Endothelial cell of umbilical vein (primary cell): ENCODE measurements at regions of chr2 and their contacts with region 1.

Region 1: DNA sequence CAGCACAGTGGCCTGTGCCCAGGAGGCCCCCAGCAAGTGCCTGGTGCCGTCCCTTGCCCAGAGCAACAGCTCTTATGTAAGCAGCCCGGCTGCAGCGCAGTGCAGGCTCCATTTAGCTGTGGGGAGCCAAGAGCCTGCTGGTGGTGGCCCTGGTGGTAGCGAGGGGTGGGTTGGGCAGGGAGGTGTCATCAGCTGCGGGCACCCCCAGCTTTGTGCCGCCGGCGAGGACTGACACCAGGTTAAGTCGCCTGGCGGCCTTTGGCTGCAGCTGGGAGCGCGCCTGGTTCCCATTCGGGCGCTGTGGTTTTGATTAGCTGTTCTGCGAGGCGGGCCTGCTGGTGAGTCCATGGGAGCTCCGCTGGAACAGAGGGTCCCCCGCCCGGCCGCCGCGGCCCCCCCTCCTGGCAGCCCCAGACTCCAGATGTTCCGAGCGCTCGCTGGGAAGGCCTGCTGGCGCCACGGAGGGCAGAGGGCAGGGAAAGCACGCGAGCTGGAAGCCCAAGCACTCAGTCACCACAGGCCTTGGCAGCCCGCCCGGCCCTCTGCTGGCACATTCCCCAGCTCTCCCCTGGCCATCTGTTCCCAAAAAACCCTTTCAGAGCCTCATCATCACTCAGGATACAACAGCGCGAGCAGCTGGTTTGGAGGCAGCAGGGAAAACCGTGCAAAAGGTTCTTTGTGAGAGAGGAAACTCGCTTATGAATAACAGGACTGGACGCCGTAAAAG is 18.4 kb downstream of the ATOH8 start:
- DNase-seq: peak; percentile 100
- H3K4me3 ChIP-seq: no peak overlapping the region
- H3K27ac ChIP-seq: peak overlapping the region; percentile 100
- H3K4me1 ChIP-seq: peaks cover 38% of the 10 kb centered on the region
- H3K27me3 ChIP-seq: no peaks in the 10 kb centered on the region
- CTCF ChIP-seq: peak; percentile 32 to 42
- POLR2A ChIP-seq: peak; percentile 55

Region 2: GRCh38 chr2:85741833-85742455 is 30.2 kb before region 1 on chr2:
- CTCF ChIA-PET with region 1: interaction called, 21 read pairs
- POLR2A ChIA-PET with region 1: interaction called, 14 read pairs
- dilution Hi-C with region 1: no loop called
- intact Hi-C with region 1: loop called (anchors 1 kb)
- DNase-seq: peak; percentile 87
- H3K4me3 ChIP-seq: peak overlapping the region in 1 of 3 experiments; percentile 3
- H3K27ac ChIP-seq: peak overlapping the region; percentile 97
- H3K4me1 ChIP-seq: peaks cover 30% of the 10 kb centered on the region
- H3K27me3 ChIP-seq: no peaks in the 10 kb centered on the region
- CTCF ChIP-seq: no peak
- POLR2A ChIP-seq: no peak

Region 3: DNA sequence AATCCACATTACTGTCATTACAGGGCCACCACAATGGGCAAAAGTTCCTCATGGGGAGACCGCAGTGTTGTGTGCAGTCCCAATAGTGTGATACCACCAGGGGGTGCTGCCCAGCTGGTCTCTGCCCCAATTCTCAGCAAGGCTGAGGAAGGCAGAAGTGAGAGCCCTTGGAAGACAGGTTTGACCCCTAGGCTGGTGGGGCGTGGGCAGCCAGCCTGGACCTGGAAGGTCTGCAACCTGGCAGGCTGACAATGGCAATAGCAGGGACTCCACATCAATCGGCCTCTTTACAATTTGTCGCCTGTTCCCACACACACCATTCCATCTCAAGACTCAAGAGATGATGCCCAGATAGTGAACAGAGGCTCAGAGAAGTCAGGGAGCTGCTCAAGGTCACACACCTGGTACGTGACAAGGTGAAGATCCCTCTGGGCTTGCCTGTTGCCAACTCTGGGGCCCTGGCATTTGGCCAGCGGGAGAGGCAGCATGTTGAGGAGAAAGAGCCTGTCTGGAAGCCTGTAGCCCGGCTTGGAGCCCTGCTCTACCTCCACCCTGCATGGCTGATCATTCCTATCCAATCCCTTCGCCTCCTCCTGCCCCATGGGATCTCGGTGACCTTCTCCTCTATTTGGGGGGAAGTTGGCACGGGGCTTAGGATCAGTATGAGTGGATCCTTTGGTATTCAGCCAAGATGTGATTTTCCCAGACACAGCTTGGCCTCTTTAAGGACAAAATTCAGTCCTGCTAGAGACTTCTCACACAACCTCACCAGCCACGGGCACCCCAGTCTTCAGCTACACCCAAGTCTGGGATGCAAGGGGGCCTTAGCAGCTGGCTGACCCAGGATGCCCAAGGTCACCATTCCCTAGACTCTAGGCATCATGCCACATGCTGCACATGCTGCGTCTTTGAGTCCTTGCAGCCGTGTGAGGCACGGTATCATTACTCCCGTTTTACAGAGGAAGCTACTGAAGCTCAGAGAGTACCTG is 21.3 kb before region 1 on chr2:
- CTCF ChIA-PET with region 1: interaction called, 106 read pairs
- POLR2A ChIA-PET with region 1: interaction called, 3 read pairs
- dilution Hi-C with region 1: no loop called
- intact Hi-C with region 1: loop called (anchors 1 kb)
- DNase-seq: peak; percentile 72
- H3K4me3 ChIP-seq: no peak overlapping the region
- H3K27ac ChIP-seq: no peak overlapping the region
- H3K4me1 ChIP-seq: peaks cover 6% of the 10 kb centered on the region
- H3K27me3 ChIP-seq: no peaks in the 10 kb centered on the region
- CTCF ChIP-seq: peak; percentile 83 to 85
- POLR2A ChIP-seq: no peak

Region 4: DNA sequence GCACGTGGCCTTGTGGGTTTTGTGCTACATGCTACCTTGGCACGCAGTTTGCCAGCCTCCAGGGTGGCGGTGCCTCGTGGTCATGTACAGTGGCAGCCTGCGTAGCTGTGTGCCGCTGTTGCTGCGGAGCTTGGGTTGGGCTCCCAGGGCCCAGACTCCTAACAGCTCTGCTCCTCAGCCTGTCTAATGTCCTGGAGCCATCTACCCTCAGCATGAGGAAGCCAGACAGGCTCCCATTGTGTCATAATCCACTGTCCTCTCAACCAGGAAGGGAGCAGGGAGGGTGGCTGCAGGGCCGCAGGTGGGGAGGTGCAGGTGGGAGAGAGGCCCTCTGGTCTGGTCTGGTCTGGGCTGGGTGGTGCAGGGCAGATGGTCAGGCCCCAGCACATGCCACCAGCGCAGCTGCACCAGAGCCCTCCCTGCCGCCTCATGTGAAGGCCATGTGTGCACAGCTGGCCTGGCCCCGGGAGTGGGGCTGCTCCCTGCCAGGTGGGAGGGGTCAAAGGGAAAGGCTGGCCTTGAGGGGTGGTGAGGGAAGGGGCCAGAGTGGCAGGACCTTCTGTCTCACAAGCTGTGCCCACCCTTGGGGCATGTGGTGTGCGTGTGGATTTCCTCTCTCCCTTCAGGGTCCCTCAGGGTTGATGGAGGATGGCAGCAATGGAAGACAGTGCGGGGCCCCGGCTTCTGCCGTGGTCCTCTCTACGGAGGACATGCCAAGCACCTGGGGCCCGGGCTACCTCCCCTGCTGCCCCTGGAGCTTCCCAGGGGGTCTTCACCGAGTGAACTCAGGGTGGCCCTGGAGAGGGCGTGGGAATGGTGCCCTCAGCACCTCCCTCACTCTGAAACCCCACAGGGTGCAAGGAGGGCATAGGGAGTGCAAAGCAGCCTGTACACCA is 13.6 kb before region 1 on chr2:
- CTCF ChIA-PET with region 1: interaction called, 106 read pairs
- POLR2A ChIA-PET with region 1: interaction called, 10 read pairs
- dilution Hi-C with region 1: no loop called
- intact Hi-C with region 1: loop called (anchors 1 kb)
- DNase-seq: no peak
- H3K4me3 ChIP-seq: no peak overlapping the region
- H3K27ac ChIP-seq: no peak overlapping the region
- H3K4me1 ChIP-seq: peaks cover 13% of the 10 kb centered on the region
- H3K27me3 ChIP-seq: no peaks in the 10 kb centered on the region
- CTCF ChIP-seq: no peak
- POLR2A ChIP-seq: no peak

Region 5: GRCh38 chr2:85792783-85793441 is 20.7 kb after region 1 on chr2:
- CTCF ChIA-PET with region 1: interaction called, 50 read pairs
- POLR2A ChIA-PET with region 1: interaction called, 3 read pairs
- dilution Hi-C with region 1: no loop called
- intact Hi-C with region 1: loop called (anchors 1 kb)
- DNase-seq: peak; percentile 88
- H3K4me3 ChIP-seq: no peak overlapping the region
- H3K27ac ChIP-seq: peak overlapping the region; percentile 51
- H3K4me1 ChIP-seq: peaks cover 25% of the 10 kb centered on the region
- H3K27me3 ChIP-seq: no peaks in the 10 kb centered on the region
- CTCF ChIP-seq: no peak
- POLR2A ChIP-seq: no peak